ENCODE measurements at regions of chr5 and their contacts with region 1.

Region 1: DNA sequence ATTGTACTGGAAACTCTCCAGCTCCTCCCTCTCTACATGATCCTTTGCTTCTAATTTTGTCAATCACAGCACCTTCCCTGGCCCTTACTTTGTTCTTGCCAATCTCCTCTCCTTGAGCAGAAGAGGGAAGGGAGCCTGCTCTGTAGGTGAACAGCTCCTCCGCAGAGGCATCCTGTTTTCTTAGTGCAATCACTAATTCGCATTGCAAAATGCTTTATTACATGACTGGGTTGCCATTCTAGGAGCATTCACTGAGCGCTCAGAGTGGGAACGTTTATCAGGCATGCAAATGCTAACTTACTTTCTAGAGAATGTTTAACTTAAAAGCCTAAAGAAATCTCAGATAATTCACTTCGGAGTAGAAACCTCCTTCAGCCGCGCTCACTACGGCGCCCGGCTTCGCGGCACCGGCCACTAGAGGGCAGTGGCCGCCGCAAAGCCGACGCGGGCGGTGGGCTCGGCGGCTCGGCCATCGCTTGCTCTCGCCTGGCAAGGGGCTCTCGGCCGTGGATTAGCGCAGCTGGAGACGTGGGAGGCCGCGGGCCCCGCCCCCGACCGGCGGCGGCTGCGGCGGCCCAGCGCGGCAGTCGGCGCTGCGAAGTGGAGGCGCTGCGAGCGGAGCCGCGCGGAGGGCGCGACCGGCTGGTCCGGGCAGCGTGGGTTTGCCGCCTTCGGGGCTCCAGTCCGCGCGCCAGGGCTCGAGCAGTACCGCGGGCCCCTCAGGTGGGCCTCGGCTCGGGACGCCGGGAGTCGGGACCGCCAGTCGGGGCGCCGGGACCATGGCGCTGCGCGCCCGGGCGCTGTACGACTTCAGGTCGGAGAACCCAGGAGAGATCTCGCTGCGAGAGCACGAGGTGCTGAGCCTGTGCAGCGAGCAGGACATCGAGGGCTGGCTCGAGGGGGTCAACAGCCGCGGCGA is at the start of gene SNX18:
- DNase-seq: peak; percentile 88
- ATAC-seq: peak; percentile 91 to 93
- H3K4me3 ChIP-seq: peak within 1 kb of the TSS; percentile 76 to 93 (median 86)
- H3K27ac ChIP-seq: peak within 1 kb of the TSS; percentile 79 to 94 (median 92)
- H3K4me1 ChIP-seq: peaks cover 34 to 36% of the 10 kb centered on the region in 2 donors
- H3K27me3 ChIP-seq: no peaks in the 10 kb centered on the region
- CTCF ChIP-seq: peak; percentile 96 to 99 (median 98)
- POLR2A ChIP-seq: peak; percentile 78 to 83
- total RNA-seq, gene SNX18: 16.3 to 18.5 (median 18.0) TPM

Region 2: DNA sequence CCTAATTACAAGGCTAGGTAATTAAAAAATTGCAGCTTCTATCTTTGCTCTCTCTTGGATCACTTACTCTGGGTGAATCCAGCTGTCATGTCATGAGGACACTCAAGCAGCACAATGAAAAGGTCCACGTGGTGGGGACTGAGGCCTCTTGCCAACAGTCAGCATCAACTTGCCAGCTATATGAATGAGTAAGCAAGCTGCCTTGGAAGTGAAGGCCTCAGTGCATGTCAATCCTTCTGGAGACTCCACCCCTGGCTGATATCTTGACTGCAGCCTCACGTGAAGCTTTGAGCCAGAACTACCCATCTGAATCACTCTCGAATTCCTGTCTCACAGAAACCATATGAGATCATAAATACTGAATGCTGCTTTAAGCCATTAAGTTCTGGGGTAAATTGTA is 140.6 kb after region 1 on chr5:
- in situ Hi-C with region 1: no loop called
- intact Hi-C with region 1: loop called (anchors 5 kb)
- DNase-seq: no peak
- ATAC-seq: peak in 1 of 2 donors; percentile 66
- H3K4me3 ChIP-seq: no peak overlapping the region
- H3K27ac ChIP-seq: no peak overlapping the region
- H3K4me1 ChIP-seq: peaks cover 0 to 5% of the 10 kb centered on the region in 2 donors
- H3K27me3 ChIP-seq: no peaks in the 10 kb centered on the region
- CTCF ChIP-seq: no peak
- POLR2A ChIP-seq: no peak

Region 3: DNA sequence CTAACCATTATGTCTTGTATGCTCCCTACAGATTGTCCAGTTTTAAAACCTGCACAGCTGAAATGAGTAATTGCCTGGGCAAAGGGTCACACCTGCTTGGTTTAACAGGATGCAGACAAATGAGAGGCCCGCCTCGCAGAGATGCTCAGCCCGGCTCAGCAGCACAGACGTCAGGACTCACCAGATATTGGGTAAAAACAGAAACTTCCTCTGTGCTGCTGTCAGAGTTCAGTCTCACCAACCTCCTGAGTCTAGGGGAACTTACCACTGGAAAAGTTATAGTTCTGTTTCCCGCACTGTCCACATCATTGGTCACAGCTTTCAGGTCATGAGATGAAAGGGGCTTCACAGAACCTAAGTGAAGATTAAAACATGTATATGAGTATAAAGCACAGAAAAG is 315.4 kb after region 1 on chr5:
- in situ Hi-C with region 1: no loop called
- intact Hi-C with region 1: no loop called
- DNase-seq: no peak
- ATAC-seq: no peak
- H3K4me3 ChIP-seq: no peak overlapping the region
- H3K27ac ChIP-seq: no peak overlapping the region
- H3K4me1 ChIP-seq: no peaks in the 10 kb centered on the region
- H3K27me3 ChIP-seq: no peaks in the 10 kb centered on the region
- CTCF ChIP-seq: no peak
- POLR2A ChIP-seq: no peak

Region 4: GRCh38 chr5:54852007-54852406 is 334.6 kb after region 1 on chr5:
- in situ Hi-C with region 1: loop called in 3 of 4 experiments (anchors 5 to 10 kb)
- intact Hi-C with region 1: no loop called
- DNase-seq: no peak
- ATAC-seq: no peak
- H3K4me3 ChIP-seq: no peak overlapping the region
- H3K27ac ChIP-seq: no peak overlapping the region
- H3K4me1 ChIP-seq: no peaks in the 10 kb centered on the region
- H3K27me3 ChIP-seq: no peaks in the 10 kb centered on the region
- CTCF ChIP-seq: no peak
- POLR2A ChIP-seq: no peak

Region 5: DNA sequence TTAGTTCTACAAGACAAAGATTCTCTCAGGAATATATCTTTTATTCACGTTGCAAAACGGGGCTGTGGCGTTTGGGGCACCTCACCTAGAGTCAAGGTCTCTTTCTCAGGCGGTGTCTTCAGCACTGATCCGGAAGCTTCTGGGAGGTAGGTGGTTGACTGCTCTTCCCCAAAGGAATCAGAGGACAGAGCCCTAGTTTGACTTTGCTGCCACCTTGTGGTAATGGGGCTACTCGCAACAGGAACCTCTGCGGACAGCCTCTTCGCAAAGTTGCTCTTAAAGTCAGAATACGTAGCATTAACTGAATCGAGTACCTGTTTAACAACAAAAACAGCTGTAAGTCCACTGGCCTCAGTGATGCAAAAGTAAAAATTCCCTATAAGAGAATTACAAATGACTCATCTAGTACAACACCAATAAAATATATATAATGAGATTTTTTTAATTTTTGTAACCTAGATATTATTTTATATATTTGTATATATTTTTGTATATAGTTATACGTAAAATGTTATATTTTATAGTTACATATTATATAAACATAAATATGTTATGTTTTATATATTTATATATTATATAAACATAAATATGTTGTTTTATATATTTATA is 629.2 kb after region 1 on chr5:
- in situ Hi-C with region 1: loop called in 3 of 4 experiments (anchors 25 kb)
- intact Hi-C with region 1: loop called (anchors 2 kb)
- DNase-seq: peak; percentile 42 to 66
- ATAC-seq: peak; percentile 77 to 98
- H3K4me3 ChIP-seq: no peak overlapping the region
- H3K27ac ChIP-seq: no peak overlapping the region
- H3K4me1 ChIP-seq: peaks cover 0 to 4% of the 10 kb centered on the region in 2 donors
- H3K27me3 ChIP-seq: peaks cover 0 to 3% (median 0%) of the 10 kb centered on the region in 3 donors
- CTCF ChIP-seq: peak; percentile 64 to 92 (median 80)
- POLR2A ChIP-seq: no peak